ENCODE measurements at regions of chr15 and their contacts with region 1.

Region 1: GRCh38 chr15:43903864-43904290 is 77.1 kb downstream of the WDR76 start:
- DNase-seq: no peak

Region 2: DNA sequence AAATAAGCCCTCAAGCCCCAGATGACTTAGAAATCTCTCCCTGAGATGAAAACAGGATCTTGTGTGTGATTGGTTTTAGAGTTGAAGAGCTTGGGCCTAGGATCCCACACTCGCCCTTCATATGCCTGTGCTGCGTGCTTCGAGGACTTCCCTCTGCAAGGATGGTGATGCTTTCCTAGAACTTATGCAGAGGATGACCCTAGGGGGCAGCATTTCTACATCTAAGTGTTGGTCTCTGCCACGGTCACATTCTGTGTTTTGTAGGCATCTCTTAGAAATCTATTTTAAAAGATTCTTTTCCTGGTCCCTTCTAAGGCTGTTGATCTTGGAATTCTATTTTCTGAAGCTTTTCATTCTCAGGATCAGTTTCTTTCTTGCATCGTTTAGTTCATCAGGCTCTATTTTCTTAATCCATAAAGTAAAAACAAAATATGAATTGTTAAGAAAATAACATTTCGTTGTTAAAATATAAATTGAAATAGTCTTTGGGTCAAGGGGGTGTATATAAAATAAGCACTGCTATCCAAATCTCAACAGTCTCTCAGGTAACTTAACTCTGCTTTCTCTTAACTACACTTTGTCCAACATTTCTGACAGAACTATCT is 31.4 kb before region 1 on chr15:
- intact Hi-C with region 1: no loop called
- DNase-seq: peak; percentile 28

Region 3: GRCh38 chr15:44066316-44066740 is 162.5 kb after region 1 on chr15:
- intact Hi-C with region 1: loop called in 1 of 2 experiments (anchors 10 kb)
- DNase-seq: no peak

Region 4: GRCh38 chr15:44215594-44215993 is 311.7 kb after region 1 on chr15:
- intact Hi-C with region 1: loop called (anchors 10 kb)
- DNase-seq: no peak

Measured in posterior vena cava (tissue), 2 donors.